T-cell (primary cell): ENCODE measurements at regions of chr9 and their contacts with region 1.

Region 1: GRCh38 chr9:36995927-36996705 is 38.0 kb downstream of the PAX5 start:
- DNase-seq: peak in 33 of 35 experiments; percentile 13 to 68 (median 41)
- ATAC-seq: peak; percentile 48 to 77 (median 64)
- H3K4me3 ChIP-seq: peak overlapping the region; percentile 8 to 36
- H3K4me3 Mint-ChIP-seq: peak overlapping the region in 2 of 3 donors; percentile 14 to 18
- H3K27ac ChIP-seq: no peak overlapping the region
- H3K27ac Mint-ChIP-seq: no peak overlapping the region
- H3K4me1 ChIP-seq: peaks cover 0 to 11% of the 10 kb centered on the region in 2 experiments
- H3K4me1 Mint-ChIP-seq: peaks cover 4 to 14% (median 7%) of the 10 kb centered on the region in 3 donors
- H3K27me3 ChIP-seq: peaks cover 2 to 59% of the 10 kb centered on the region in 2 experiments
- H3K27me3 Mint-ChIP-seq: peaks cover 43 to 44% of the 10 kb centered on the region in 2 donors

Region 2: DNA sequence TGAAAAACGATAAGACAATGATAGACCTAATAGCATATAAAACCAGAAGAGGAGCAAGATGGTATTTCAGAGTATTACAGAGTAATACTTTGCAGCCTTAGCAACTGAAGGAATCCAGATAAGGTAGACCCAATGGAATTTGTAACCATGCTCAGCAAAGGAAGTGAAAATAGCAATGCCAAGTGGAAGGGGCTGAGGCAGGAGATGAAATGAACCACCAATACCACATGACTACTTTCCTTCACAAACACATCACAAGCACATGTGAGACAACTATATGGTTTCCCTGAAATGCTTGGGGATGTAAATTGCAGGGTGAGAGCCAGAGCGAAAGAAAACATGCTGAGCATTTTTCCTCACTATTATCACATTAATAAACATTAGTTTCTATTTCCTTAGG is 503.3 kb before region 1 on chr9:
- CTCF ChIA-PET with region 1: no interaction called
- POLR2A ChIA-PET with region 1: interaction called in 1 of 2 experiments, 11 read pairs
- DNase-seq: peak in 14 of 35 experiments; percentile 10 to 69 (median 22)
- ATAC-seq: peak; percentile 59 to 82 (median 77)
- H3K4me3 ChIP-seq: no peak overlapping the region
- H3K4me3 Mint-ChIP-seq: peak overlapping the region; percentile 68 to 84 (median 71)
- H3K27ac ChIP-seq: peak overlapping the region; percentile 63
- H3K27ac Mint-ChIP-seq: peak overlapping the region; percentile 80 to 86
- H3K4me1 ChIP-seq: peaks cover 28 to 35% of the 10 kb centered on the region in 2 experiments
- H3K4me1 Mint-ChIP-seq: peaks cover 57 to 67% (median 63%) of the 10 kb centered on the region in 3 donors
- H3K27me3 ChIP-seq: no peaks in the 10 kb centered on the region
- H3K27me3 Mint-ChIP-seq: no peaks in the 10 kb centered on the region

Region 3: GRCh38 chr9:37036776-37037502 is 40.8 kb after region 1 on chr9:
- CTCF ChIA-PET with region 1: no interaction called
- POLR2A ChIA-PET with region 1: no interaction called
- DNase-seq: peak in 15 of 35 experiments; percentile 18 to 63 (median 36)
- ATAC-seq: peak; percentile 64 to 76 (median 68)
- H3K4me3 ChIP-seq: peak overlapping the region; percentile 51 to 89
- H3K4me3 Mint-ChIP-seq: peak overlapping the region; percentile 77 to 86 (median 83)
- H3K27ac ChIP-seq: no peak overlapping the region
- H3K27ac Mint-ChIP-seq: peak overlapping the region in 1 of 2 donors; percentile 79
- H3K4me1 ChIP-seq: peaks cover 12 to 48% of the 10 kb centered on the region in 2 experiments
- H3K4me1 Mint-ChIP-seq: peaks cover 33 to 44% (median 36%) of the 10 kb centered on the region in 3 donors
- H3K27me3 ChIP-seq: peaks cover 14 to 83% of the 10 kb centered on the region in 2 experiments
- H3K27me3 Mint-ChIP-seq: peaks cover 68 to 81% of the 10 kb centered on the region in 2 donors

Region 4: GRCh38 chr9:37936965-37937364 is 940.8 kb after region 1 on chr9:
- CTCF ChIA-PET with region 1: interaction called in 1 of 2 experiments, 10 read pairs
- POLR2A ChIA-PET with region 1: no interaction called
- DNase-seq: no peak
- ATAC-seq: no peak
- H3K4me3 ChIP-seq: no peak overlapping the region
- H3K4me3 Mint-ChIP-seq: no peak overlapping the region
- H3K27ac ChIP-seq: no peak overlapping the region
- H3K27ac Mint-ChIP-seq: no peak overlapping the region
- H3K4me1 ChIP-seq: no peaks in the 10 kb centered on the region
- H3K4me1 Mint-ChIP-seq: no peaks in the 10 kb centered on the region
- H3K27me3 ChIP-seq: peaks cover 0 to 4% of the 10 kb centered on the region in 2 experiments
- H3K27me3 Mint-ChIP-seq: no peaks in the 10 kb centered on the region